B cell (primary cell): ENCODE measurements at regions of chrX and their contacts with region 1.

Region 1: DNA sequence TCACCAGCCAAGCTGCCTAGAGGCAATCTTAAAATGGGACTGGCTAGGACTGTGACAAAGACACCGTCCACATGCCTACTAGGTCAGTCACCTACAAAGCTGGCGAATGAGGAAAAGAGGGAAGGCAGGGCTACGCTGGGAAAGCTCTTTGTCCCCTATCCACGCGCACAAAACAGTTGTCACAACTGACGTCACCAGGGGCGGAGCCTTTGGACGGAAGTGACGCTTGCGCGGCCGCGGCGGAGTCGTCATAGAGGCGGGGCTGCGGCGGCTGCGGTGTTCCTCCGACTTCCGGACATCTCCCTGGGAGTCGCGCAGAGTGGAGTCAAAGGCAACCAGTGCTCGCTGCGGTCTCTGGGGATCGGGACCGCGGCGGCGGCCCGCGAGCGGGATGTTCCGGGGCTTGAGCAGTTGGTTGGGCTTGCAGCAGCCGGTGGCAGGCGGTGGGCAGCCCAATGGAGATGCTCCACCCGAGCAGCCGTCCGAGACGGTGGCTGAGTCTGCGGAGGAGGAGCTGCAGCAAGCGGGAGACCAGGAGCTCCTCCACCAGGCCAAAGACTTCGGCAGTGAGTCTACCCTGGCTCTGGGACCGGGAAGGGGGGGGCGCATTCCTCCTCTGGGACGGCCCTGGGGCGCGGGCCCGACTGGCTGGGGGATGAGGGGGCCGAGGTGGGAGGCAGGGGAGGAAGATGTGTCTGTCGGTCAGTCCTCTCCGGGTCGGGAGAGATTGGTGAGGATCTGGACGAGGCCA is at the start of gene SYAP1:
- DNase-seq: peak; percentile 93
- ATAC-seq: peak; percentile 90
- H3K4me3 ChIP-seq: peak within 1 kb of the TSS; percentile 58 to 91 (median 80)
- H3K4me3 Mint-ChIP-seq: peak within 1 kb of the TSS; percentile 92
- H3K27ac ChIP-seq: peak within 1 kb of the TSS; percentile 92 to 96
- H3K27ac Mint-ChIP-seq: peak within 1 kb of the TSS; percentile 97
- H3K4me1 ChIP-seq: peaks cover 7 to 17% of the 10 kb centered on the region in 2 donors
- H3K4me1 Mint-ChIP-seq: peaks cover 18% of the 10 kb centered on the region
- H3K27me3 ChIP-seq: no peaks in the 10 kb centered on the region
- H3K27me3 Mint-ChIP-seq: no peaks in the 10 kb centered on the region
- CTCF ChIP-seq: no peak
- total RNA-seq, gene SYAP1: 18.0 and 18.3 TPM in 2 replicates

Region 2: GRCh38 chrX:15674841-15675489 is 1044.5 kb before region 1 on chrX:
- CTCF ChIA-PET with region 1: no interaction called
- POLR2A ChIA-PET with region 1: no interaction called
- intact Hi-C with region 1: loop called (anchors 1 kb)
- DNase-seq: peak; percentile 96
- ATAC-seq: peak; percentile 81
- H3K4me3 ChIP-seq: peak overlapping the region; percentile 67 to 99 (median 80)
- H3K4me3 Mint-ChIP-seq: no peak overlapping the region
- H3K27ac ChIP-seq: peak overlapping the region; percentile 98 to 100
- H3K27ac Mint-ChIP-seq: no peak overlapping the region
- H3K4me1 ChIP-seq: peaks cover 16 to 17% of the 10 kb centered on the region in 2 donors
- H3K4me1 Mint-ChIP-seq: peaks cover 15% of the 10 kb centered on the region
- H3K27me3 ChIP-seq: no peaks in the 10 kb centered on the region
- H3K27me3 Mint-ChIP-seq: no peaks in the 10 kb centered on the region
- CTCF ChIP-seq: no peak

Region 3: GRCh38 chrX:16786139-16786790 is 66.8 kb after region 1 on chrX and contains the start of gene TXLNG:
- CTCF ChIA-PET with region 1: interaction called, 5 read pairs
- POLR2A ChIA-PET with region 1: no interaction called
- intact Hi-C with region 1: loop called (anchors 1 kb)
- DNase-seq: peak; percentile 95
- ATAC-seq: peak; percentile 94
- H3K4me3 ChIP-seq: peak within 1 kb of the TSS; percentile 68 to 89 (median 81)
- H3K4me3 Mint-ChIP-seq: peak within 1 kb of the TSS; percentile 96
- H3K27ac ChIP-seq: peak within 1 kb of the TSS; percentile 89 to 95
- H3K27ac Mint-ChIP-seq: peak within 1 kb of the TSS; percentile 95
- H3K4me1 ChIP-seq: peaks cover 8 to 11% of the 10 kb centered on the region in 2 donors
- H3K4me1 Mint-ChIP-seq: peaks cover 17% of the 10 kb centered on the region
- H3K27me3 ChIP-seq: no peaks in the 10 kb centered on the region
- H3K27me3 Mint-ChIP-seq: no peaks in the 10 kb centered on the region
- CTCF ChIP-seq: no peak
- total RNA-seq, gene TXLNG: 12.5 and 13.5 TPM in 2 replicates

Region 4: GRCh38 chrX:16946361-16946964 is 227.0 kb after region 1 on chrX and contains the start of gene REPS2:
- CTCF ChIA-PET with region 1: no interaction called
- POLR2A ChIA-PET with region 1: no interaction called
- intact Hi-C with region 1: loop called (anchors 2 kb)
- DNase-seq: peak; percentile 88
- ATAC-seq: peak; percentile 94
- H3K4me3 ChIP-seq: peak within 1 kb of the TSS in 4 of 5 experiments; percentile 51 to 64 (median 62)
- H3K4me3 Mint-ChIP-seq: peak within 1 kb of the TSS; percentile 87
- H3K27ac ChIP-seq: peak within 1 kb of the TSS in 1 of 2 donors; percentile 23
- H3K27ac Mint-ChIP-seq: peak within 1 kb of the TSS; percentile 50
- H3K4me1 ChIP-seq: peaks cover 8 to 17% of the 10 kb centered on the region in 2 donors
- H3K4me1 Mint-ChIP-seq: peaks cover 9% of the 10 kb centered on the region
- H3K27me3 ChIP-seq: no peaks in the 10 kb centered on the region
- H3K27me3 Mint-ChIP-seq: no peaks in the 10 kb centered on the region
- CTCF ChIP-seq: no peak
- total RNA-seq, gene REPS2: 4.9 and 9.4 TPM in 2 replicates

Region 5: DNA sequence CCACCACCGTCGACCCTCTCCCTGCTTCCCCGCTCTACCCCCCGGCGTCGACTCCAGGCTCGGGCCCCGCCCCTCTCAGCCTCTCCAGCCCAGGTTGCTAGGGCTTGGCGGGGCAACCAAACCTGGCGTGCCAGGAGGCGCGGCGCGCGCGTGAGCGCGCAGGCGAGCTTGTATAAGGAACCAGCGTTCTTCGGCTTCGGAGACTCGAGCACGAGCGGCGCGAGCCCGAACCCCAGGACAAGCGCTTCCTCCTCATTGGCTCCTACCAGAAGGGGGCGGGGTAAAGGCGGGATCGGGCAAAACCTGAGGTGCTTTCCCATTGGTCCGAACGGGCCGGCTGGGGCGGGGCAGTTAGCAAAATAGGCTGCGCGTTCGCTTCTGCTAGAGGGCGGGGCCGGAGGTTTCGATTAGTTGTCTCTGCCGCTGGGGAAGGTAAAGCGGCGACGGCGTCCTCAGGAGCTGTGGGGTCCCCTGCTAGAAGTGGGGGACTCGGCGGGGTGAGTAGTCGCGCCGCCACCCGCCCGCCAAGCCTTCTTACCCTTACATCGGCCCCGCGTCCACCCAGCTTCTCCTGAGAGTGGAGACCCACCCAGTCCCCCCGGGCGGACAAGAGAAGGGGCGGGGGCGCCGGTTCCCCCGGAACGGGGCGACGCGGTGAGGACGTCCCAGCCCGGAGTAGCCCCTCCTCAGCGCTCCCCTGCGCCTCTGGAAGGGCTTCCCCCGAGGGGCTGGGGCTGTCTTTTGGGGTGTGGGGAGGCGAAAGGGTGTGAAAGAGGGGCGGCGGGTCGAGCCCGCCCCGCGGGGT is 1705.9 kb after region 1 on chrX and contains the start of gene CDKL5:
- CTCF ChIA-PET with region 1: no interaction called
- POLR2A ChIA-PET with region 1: no interaction called
- intact Hi-C with region 1: loop called (anchors 5 kb)
- DNase-seq: peak; percentile 95
- ATAC-seq: peak; percentile 92
- H3K4me3 ChIP-seq: peak within 1 kb of the TSS; percentile 71 to 91 (median 75)
- H3K4me3 Mint-ChIP-seq: peak within 1 kb of the TSS; percentile 92
- H3K27ac ChIP-seq: peak within 1 kb of the TSS; percentile 82 to 86
- H3K27ac Mint-ChIP-seq: peak within 1 kb of the TSS; percentile 94
- H3K4me1 ChIP-seq: peaks cover 8 to 12% of the 10 kb centered on the region in 2 donors
- H3K4me1 Mint-ChIP-seq: peaks cover 12% of the 10 kb centered on the region
- H3K27me3 ChIP-seq: no peaks in the 10 kb centered on the region
- H3K27me3 Mint-ChIP-seq: no peaks in the 10 kb centered on the region
- CTCF ChIP-seq: no peak
- total RNA-seq, gene CDKL5: 4.6 and 4.7 TPM in 2 replicates